Mammary epithelial cell (primary cell): ENCODE measurements at regions of chr1 and their contacts with region 1.

Region 1: GRCh38 chr1:174659823-174660515 is 212.2 kb downstream of the GPR52 start:
- DNase-seq: peak; percentile 98
- H3K4me3 ChIP-seq: no peak overlapping the region
- H3K27ac ChIP-seq: no peak overlapping the region
- H3K4me1 ChIP-seq: peaks cover 16% of the 10 kb centered on the region
- H3K27me3 ChIP-seq: no peaks in the 10 kb centered on the region
- CTCF ChIP-seq: peak in 1 of 2 donors; percentile 24

Region 2: DNA sequence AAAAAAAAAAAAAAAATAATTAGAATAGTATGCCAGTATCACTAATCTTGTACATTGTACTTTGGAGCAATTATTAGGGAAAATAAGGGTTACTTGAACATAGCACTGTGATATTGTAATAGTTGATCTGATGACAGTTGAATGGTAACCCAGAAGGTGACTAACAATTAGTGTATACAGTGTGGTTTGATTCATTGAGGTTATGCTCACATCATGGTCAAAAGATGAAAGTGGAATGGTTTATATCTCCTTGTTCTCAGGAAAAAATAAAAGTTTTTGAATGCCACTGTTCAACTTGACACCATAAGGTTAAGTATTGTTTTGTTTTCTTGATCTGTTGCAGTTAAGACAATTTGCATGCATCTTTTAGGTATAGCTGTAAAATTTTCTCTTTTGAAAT is 125.2 kb before region 1 on chr1:
- CTCF ChIA-PET with region 1: no interaction called
- dilution Hi-C with region 1: no loop called
- in situ Hi-C with region 1: no loop called
- intact Hi-C with region 1: loop called (anchors 10 kb)
- DNase-seq: peak; percentile 66
- H3K4me3 ChIP-seq: no peak overlapping the region
- H3K27ac ChIP-seq: no peak overlapping the region
- H3K4me1 ChIP-seq: no peaks in the 10 kb centered on the region
- H3K27me3 ChIP-seq: no peaks in the 10 kb centered on the region
- CTCF ChIP-seq: no peak

Region 3: GRCh38 chr1:174550296-174550695 is 109.7 kb before region 1 on chr1:
- CTCF ChIA-PET with region 1: no interaction called
- dilution Hi-C with region 1: no loop called
- in situ Hi-C with region 1: no loop called
- intact Hi-C with region 1: no loop called
- DNase-seq: peak; percentile 5
- H3K4me3 ChIP-seq: no peak overlapping the region
- H3K27ac ChIP-seq: no peak overlapping the region
- H3K4me1 ChIP-seq: no peaks in the 10 kb centered on the region
- H3K27me3 ChIP-seq: no peaks in the 10 kb centered on the region
- CTCF ChIP-seq: no peak